ENCODE measurements at regions of chr1 and their contacts with region 1.

Region 1: DNA sequence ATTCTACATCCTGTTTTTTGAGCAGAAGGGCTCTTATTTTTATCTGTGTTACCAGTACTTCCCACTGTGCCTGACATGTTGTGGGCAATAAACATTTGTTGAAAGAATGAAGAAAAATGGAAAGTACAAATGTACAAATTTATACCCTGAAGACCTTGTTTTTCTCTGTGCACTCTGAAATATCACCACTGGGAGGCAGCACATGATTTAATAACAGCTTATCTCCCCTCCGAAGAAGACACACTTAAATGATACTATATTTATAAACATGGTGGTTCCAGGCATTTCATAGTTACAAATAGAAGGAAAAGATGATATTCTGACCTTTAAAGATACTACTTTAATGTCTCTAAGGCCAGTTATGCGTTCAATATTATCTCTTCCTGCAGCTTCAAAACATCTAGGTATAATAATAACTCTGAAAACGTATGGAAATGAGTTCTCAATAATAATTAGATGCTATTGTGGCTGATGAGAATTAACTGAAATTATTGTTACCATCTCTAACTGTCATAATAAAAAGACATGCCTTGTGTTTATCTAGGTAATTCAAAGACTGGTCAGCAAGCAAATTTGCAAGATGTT is 12.8 kb downstream of the DYNLT5 start:
- DNase-seq: no peak
- H3K4me3 ChIP-seq: no peak overlapping the region
- H3K27ac ChIP-seq: no peak overlapping the region
- H3K4me1 ChIP-seq: no peaks in the 10 kb centered on the region
- H3K27me3 ChIP-seq: no peaks in the 10 kb centered on the region
- CTCF ChIP-seq: peak in 2 of 3 experiments; percentile 55 to 63

Region 2: GRCh38 chr1:66996018-66996682 is 231.1 kb after region 1 on chr1:
- intact Hi-C with region 1: loop called (anchors 10 kb)
- DNase-seq: peak in 1 of 2 donors; percentile 80
- H3K4me3 ChIP-seq: no peak overlapping the region
- H3K27ac ChIP-seq: no peak overlapping the region
- H3K4me1 ChIP-seq: peaks cover 0 to 3% of the 10 kb centered on the region in 2 donors
- H3K27me3 ChIP-seq: no peaks in the 10 kb centered on the region
- CTCF ChIP-seq: peak; percentile 77 to 88 (median 80)

Region 3: GRCh38 chr1:67149179-67149770 is 384.2 kb after region 1 on chr1:
- intact Hi-C with region 1: loop called (anchors 2 kb)
- DNase-seq: peak in 1 of 2 donors; percentile 73
- H3K4me3 ChIP-seq: no peak overlapping the region
- H3K27ac ChIP-seq: no peak overlapping the region
- H3K4me1 ChIP-seq: peaks cover 0 to 3% of the 10 kb centered on the region in 2 donors
- H3K27me3 ChIP-seq: no peaks in the 10 kb centered on the region
- CTCF ChIP-seq: peak; percentile 67 to 84 (median 77)